Left cardiac atrium (tissue), 4 donors: ENCODE measurements at regions of chr21 and their contacts with region 1.

Region 1: DNA sequence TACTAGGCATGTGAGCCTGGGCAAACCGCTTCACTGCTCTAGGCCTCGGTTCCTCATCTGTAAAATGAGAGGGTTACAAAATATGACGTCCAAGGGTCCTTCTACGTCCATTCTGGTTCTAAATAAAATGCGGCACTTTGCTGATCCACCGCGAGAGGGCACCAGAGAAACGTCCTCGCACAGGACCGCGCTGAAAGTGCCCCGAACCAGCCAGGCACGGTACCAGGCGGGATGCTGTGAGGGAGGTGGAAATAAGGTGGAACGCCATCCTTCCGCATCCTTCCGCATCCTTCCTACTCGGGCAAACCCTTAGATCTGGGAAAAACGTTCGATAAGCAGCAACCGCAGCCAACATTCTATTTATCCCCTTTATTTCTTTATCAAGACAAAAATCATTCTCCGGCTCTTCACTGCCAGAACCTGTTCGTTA is 60.3 kb upstream of the KRTAP19-8 start:
- DNase-seq: peak; percentile 71
- ATAC-seq: peak; percentile 70 to 79

Region 2: GRCh38 chr21:31161157-31161556 is 62.6 kb after region 1 on chr21:
- intact Hi-C with region 1: no loop called
- DNase-seq: no peak
- ATAC-seq: peak in 1 of 2 donors; percentile 23

Region 3: GRCh38 chr21:31180256-31181081 is 81.9 kb after region 1 on chr21:
- intact Hi-C with region 1: loop called in 1 of 2 experiments (anchors 2 kb)
- DNase-seq: no peak
- ATAC-seq: peak in 1 of 2 donors; percentile 37

Region 4: DNA sequence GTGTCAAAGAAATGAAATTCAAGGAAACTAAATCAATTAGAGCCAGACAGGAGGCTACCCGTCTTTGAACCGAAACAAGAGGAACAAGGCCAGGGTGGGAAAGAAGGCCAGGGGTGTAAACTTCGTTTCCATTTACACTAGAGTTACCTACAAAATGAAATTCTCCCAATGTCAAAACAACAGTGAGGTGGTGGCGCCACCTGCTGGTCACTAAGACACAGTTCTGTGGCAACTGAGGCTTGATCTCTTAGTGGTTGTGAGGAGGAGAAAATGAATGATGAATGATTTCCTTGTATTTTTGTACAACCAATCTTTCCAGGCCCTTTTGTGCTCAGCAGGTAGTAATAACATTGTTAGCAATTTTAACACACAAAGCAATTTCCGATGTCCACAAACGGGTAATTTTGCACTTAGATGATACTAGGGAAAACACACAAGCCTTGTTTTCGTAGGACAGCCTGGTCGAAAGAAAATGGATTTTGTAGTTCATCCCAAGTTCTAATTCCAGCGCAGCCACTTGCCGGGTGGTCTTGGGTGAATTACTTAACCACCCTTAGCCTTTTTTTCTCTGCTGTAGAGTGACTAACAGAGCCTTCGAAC is 506.1 kb after region 1 on chr21:
- intact Hi-C with region 1: loop called in 1 of 2 experiments (anchors 5 kb)
- DNase-seq: peak; percentile 76
- ATAC-seq: peak; percentile 69 to 78

Region 5: GRCh38 chr21:31830701-31831100 is 732.1 kb after region 1 on chr21:
- intact Hi-C with region 1: no loop called
- DNase-seq: no peak
- ATAC-seq: no peak